ENCODE measurements at regions of chr6 and their contacts with region 1.

Region 1: DNA sequence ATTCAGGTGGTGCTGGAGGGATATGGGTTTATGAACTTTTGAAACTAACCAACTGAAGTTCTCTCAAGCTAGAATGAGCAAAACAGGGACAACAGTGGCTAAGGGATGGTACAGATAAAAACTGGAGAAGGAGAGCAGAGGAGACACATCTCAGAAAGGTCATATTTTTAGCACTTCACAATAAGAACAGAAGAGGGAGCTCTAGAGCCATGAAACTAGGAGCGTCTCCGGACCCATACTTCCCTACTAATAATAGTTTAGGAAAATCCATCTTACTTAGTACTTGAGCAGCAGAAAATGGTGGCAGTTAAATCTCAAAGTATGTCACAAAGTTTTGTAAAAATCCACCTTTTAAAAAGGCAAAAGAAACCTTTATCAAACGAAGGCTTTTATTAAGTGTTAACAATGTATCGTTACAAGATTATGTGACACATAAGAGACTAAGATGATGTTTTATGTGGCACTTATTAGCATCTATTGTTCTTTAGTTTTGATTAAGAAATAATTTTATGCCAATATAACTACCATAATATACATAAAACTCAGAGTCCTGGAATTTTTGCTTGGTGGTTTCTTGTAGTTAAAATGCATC is 278.6 kb downstream of the TBC1D32 start:
- DNase-seq: peak in 4 of 5 donors; percentile 13 to 28 (median 20)
- H3K4me3 ChIP-seq: no peak overlapping the region
- H3K4me3 Mint-ChIP-seq: no peak overlapping the region
- H3K27ac ChIP-seq: no peak overlapping the region
- H3K27ac Mint-ChIP-seq: no peak overlapping the region
- H3K4me1 ChIP-seq: no peaks in the 10 kb centered on the region
- H3K4me1 Mint-ChIP-seq: peaks cover 0 to 4% (median under 1%) of the 10 kb centered on the region in 4 donors
- H3K27me3 ChIP-seq: no peaks in the 10 kb centered on the region
- H3K27me3 Mint-ChIP-seq: no peaks in the 10 kb centered on the region

Region 2: GRCh38 chr6:121086876-121087275 is 31.2 kb after region 1 on chr6:
- CTCF ChIA-PET with region 1: no interaction called
- POLR2A ChIA-PET with region 1: no interaction called
- intact Hi-C with region 1: no loop called
- DNase-seq: no peak
- H3K4me3 ChIP-seq: no peak overlapping the region
- H3K4me3 Mint-ChIP-seq: no peak overlapping the region
- H3K27ac ChIP-seq: no peak overlapping the region
- H3K27ac Mint-ChIP-seq: no peak overlapping the region
- H3K4me1 ChIP-seq: no peaks in the 10 kb centered on the region
- H3K4me1 Mint-ChIP-seq: no peaks in the 10 kb centered on the region
- H3K27me3 ChIP-seq: no peaks in the 10 kb centered on the region
- H3K27me3 Mint-ChIP-seq: no peaks in the 10 kb centered on the region

Region 3: DNA sequence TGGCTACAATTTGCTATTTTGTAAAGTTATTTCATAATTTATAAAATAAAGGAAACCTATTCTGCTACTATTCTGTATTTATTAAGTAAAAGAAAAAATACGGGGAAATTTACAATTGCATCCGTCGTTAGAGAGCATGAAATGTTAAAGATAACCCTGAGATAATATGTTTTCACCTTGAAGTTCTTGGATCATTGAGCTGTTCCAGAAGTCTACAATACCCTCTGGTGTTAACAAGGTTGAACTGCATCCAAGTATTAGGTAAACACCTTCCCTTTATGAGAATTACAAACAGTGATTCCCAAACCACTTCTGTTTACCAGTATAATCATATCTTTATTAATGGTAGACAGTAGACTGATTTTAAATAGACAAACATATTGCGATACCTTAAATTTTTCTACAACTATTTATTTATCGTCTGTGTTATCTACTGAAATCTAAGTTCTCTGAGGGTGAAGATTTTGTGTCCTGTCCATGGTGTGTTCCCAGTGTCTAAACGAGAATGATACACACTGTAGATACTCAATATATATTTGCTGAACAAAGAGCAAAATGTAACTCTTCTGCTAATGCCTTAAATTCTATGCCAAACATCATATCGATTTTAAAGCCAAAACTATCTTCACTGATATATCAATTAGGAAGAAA is 250.4 kb after region 1 on chr6:
- CTCF ChIA-PET with region 1: interaction called, 7 read pairs
- POLR2A ChIA-PET with region 1: no interaction called
- intact Hi-C with region 1: loop called (anchors 1 kb)
- DNase-seq: peak in 4 of 5 donors; percentile 3 to 14 (median 9)
- H3K4me3 ChIP-seq: no peak overlapping the region
- H3K4me3 Mint-ChIP-seq: no peak overlapping the region
- H3K27ac ChIP-seq: no peak overlapping the region
- H3K27ac Mint-ChIP-seq: no peak overlapping the region
- H3K4me1 ChIP-seq: no peaks in the 10 kb centered on the region
- H3K4me1 Mint-ChIP-seq: peaks cover 0 to 1% (median 0%) of the 10 kb centered on the region in 4 donors
- H3K27me3 ChIP-seq: no peaks in the 10 kb centered on the region
- H3K27me3 Mint-ChIP-seq: no peaks in the 10 kb centered on the region

Region 4: DNA sequence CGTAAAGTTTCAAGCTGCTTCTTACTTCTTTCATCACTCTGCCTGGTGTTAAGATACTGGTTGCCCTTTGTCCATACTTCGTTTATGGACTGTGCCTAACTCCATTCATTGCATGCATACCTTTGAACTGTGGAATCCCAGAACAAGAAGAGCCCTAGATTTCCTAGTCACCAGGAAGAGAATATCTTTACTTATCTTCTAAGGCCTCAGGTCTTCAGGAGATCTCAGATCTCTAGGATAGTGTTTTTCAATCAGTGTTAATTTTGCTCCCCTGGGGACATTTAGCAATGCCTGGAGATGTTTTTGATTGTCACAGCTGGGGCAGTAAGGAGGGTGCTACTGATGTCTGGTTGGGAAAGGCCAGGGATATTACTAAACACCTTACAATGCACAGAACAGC is 344.3 kb after region 1 on chr6:
- CTCF ChIA-PET with region 1: no interaction called
- POLR2A ChIA-PET with region 1: no interaction called
- intact Hi-C with region 1: loop called (anchors 2 kb)
- DNase-seq: no peak
- H3K4me3 ChIP-seq: no peak overlapping the region
- H3K4me3 Mint-ChIP-seq: no peak overlapping the region
- H3K27ac ChIP-seq: no peak overlapping the region
- H3K27ac Mint-ChIP-seq: no peak overlapping the region
- H3K4me1 ChIP-seq: no peaks in the 10 kb centered on the region
- H3K4me1 Mint-ChIP-seq: no peaks in the 10 kb centered on the region
- H3K27me3 ChIP-seq: no peaks in the 10 kb centered on the region
- H3K27me3 Mint-ChIP-seq: peaks cover 3 to 9% of the 10 kb centered on the region in 2 donors

Region 5: DNA sequence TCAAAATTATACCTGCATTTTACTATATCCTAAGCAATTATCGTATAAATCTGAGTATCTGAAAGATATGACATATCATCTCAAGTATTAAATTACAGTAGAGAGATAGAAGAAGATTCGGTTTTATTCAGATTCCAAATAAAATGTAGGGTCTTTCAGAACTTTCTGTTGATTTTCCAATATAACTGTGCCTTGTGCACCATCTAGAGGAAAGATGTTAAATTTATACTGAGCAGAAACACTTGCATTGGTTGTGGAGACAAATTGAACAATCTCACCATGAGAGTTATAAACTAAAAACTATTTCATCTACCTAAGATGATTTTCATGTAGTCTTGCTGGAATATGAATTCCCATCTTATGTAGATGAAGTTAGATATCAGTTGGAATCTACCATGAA is 1317.0 kb after region 1 on chr6:
- CTCF ChIA-PET with region 1: no interaction called
- POLR2A ChIA-PET with region 1: no interaction called
- intact Hi-C with region 1: loop called (anchors 2 kb)
- DNase-seq: no peak
- H3K4me3 ChIP-seq: no peak overlapping the region
- H3K4me3 Mint-ChIP-seq: no peak overlapping the region
- H3K27ac ChIP-seq: no peak overlapping the region
- H3K27ac Mint-ChIP-seq: no peak overlapping the region
- H3K4me1 ChIP-seq: no peaks in the 10 kb centered on the region
- H3K4me1 Mint-ChIP-seq: peaks cover 7 to 12% (median 8%) of the 10 kb centered on the region in 4 donors
- H3K27me3 ChIP-seq: peaks cover 5% of the 10 kb centered on the region
- H3K27me3 Mint-ChIP-seq: peaks cover 4 to 8% of the 10 kb centered on the region in 2 donors

Measured in CD4-positive, alpha-beta memory T cell (primary cell).